Astrocyte of the cerebellum (primary cell): ENCODE measurements at regions of chr20 and their contacts with region 1.

Region 1: DNA sequence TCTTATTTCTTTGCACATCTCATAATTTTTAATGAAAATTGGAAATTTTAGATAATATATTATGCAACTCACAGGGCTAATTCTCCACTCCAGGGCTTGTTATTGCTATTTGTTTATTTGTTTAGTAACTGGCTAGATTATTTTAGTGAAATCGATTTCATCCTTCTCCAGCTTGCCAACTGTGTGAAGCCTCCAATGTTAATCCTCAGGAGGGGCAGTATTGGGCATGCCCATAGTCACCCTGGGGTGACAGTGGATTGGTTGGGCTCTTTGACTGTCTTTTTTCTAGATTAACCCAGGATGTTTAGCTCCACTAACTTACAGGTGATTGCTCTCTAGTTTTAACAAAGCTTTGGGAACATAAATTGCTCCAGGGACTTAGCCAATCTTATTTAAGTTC is 450.1 kb downstream of the BMP2 start:
- DNase-seq: no peak
- H3K4me3 ChIP-seq: no peak overlapping the region
- CTCF ChIP-seq: no peak

Region 2: GRCh38 chr20:7151676-7152470 is 65.7 kb before region 1 on chr20:
- in situ Hi-C with region 1: no loop called
- DNase-seq: no peak
- H3K4me3 ChIP-seq: no peak overlapping the region
- CTCF ChIP-seq: no peak

Region 3: GRCh38 chr20:7180256-7181045 is 37.2 kb before region 1 on chr20:
- in situ Hi-C with region 1: no loop called
- DNase-seq: no peak
- H3K4me3 ChIP-seq: no peak overlapping the region
- CTCF ChIP-seq: no peak

Region 4: GRCh38 chr20:7285918-7286556 is 68.4 kb after region 1 on chr20:
- in situ Hi-C with region 1: no loop called
- DNase-seq: peak; percentile 91
- H3K4me3 ChIP-seq: no peak overlapping the region
- CTCF ChIP-seq: peak; percentile 92

Region 5: DNA sequence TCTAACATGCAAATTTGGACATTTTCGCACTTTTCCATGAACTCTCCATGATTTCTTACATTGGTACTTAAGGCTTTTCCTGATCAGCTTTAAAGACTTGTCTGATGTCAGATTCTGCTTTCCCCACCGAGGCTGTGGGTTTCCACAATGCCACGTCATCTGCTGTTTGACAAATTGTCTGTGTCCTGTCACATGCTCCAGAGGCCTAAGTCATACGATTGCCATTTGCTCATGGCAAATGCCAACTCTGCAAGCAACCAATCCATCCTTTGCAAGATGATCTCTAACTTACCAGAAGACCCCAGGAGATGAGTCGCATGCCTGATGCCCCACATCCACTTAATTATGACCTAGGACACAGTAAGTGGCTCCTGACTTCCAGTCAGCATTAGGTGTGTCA is 106.3 kb after region 1 on chr20:
- in situ Hi-C with region 1: loop called (anchors 5 kb)
- DNase-seq: no peak
- H3K4me3 ChIP-seq: no peak overlapping the region
- CTCF ChIP-seq: no peak